ENCODE measurements at regions of chr4 and their contacts with region 1.

Region 1: DNA sequence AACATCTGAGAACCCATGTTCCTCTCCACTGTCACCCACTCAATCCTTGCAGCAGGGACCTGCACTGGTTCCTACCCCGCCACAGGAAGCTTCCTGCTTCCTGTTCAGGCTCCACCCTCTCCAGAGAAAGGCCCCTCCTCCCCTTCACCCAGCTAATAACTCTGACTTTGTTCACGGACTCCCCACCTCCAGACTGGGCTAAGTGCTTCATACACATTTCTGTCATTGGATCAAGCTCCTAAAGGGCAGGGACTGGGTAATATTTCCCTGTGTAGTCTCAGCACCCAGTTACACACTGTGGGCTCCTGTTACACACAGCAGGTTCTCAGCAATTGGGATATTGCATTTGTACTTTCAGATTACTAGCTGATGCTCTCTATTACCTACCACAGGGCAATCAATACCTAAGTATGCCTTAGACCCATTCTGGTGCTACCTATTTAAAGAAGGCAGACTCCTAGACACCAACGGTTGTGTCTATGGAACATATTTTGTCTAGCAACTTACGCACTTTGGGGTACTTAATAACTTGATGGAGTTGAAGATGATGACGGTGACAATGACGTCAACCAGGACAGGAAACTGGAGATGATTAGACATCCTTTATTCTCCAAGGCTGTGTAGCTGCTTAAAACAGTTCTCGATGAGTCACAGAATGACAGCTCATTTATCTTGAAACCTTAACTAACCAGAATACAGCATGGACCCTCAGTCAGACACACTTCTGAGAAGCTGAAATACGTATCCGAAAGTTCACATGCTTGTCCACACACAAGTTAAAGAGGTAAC is 58.1 kb downstream of the MAML3 start:
- DNase-seq: peak; percentile 59 to 91 (median 72)
- H3K4me3 ChIP-seq: peak overlapping the region; percentile 4 to 21
- H3K4me3 Mint-ChIP-seq: peak overlapping the region; percentile 76 to 85 (median 80)
- H3K27ac ChIP-seq: peak overlapping the region; percentile 61
- H3K27ac Mint-ChIP-seq: peak overlapping the region; percentile 82 to 94 (median 93)
- H3K4me1 ChIP-seq: peaks cover 48% of the 10 kb centered on the region
- H3K4me1 Mint-ChIP-seq: peaks cover 39 to 51% (median 50%) of the 10 kb centered on the region in 4 donors
- H3K27me3 ChIP-seq: no peaks in the 10 kb centered on the region
- H3K27me3 Mint-ChIP-seq: no peaks in the 10 kb centered on the region

Region 2: DNA sequence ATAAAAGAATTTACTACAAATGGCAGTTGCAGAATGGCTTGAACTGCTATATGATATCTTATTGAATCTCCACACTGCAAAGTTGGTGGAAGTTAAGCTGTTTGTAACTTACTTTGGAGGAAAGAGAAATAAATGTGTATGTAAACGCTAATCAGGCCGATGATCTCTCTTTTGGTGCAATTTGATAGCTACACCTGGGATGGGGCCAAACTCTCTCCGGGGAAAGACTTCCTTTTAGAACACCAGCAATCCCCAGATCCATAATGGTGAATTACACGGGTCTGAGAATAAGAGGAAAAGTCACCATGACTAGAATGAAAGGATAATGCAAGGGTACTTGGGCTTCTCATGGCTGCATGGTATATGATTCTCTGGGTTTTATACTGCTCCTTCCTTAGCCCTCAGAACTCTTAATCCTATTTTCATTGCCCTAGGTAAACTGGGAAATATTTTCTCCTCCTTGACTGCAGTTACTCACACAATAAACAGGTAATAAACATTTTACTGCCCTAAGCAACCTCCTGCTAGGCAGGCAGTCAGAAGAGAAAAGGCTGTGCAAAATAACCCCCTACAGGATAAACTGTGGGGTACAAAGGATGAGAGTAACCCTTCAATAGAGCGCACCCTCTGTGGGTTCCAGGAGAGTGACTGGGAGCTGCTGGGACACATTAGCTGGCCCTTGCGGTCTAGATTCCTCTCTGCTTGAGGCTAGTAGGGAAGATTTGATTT is 321.0 kb before region 1 on chr4:
- CTCF ChIA-PET with region 1: no interaction called
- POLR2A ChIA-PET with region 1: no interaction called
- intact Hi-C with region 1: no loop called
- DNase-seq: no peak
- H3K4me3 ChIP-seq: no peak overlapping the region
- H3K4me3 Mint-ChIP-seq: no peak overlapping the region
- H3K27ac ChIP-seq: no peak overlapping the region
- H3K27ac Mint-ChIP-seq: no peak overlapping the region
- H3K4me1 ChIP-seq: no peaks in the 10 kb centered on the region
- H3K4me1 Mint-ChIP-seq: no peaks in the 10 kb centered on the region
- H3K27me3 ChIP-seq: no peaks in the 10 kb centered on the region
- H3K27me3 Mint-ChIP-seq: peaks cover 0 to 1% of the 10 kb centered on the region in 2 donors

Region 3: GRCh38 chr4:140049024-140049848 is 46.7 kb before region 1 on chr4:
- CTCF ChIA-PET with region 1: interaction called, 3 read pairs
- POLR2A ChIA-PET with region 1: no interaction called
- intact Hi-C with region 1: loop called (anchors 5 kb)
- DNase-seq: peak; percentile 26 to 50 (median 42)
- H3K4me3 ChIP-seq: peak overlapping the region in 1 of 2 donors; percentile 17
- H3K4me3 Mint-ChIP-seq: peak overlapping the region; percentile 76 to 92 (median 85)
- H3K27ac ChIP-seq: no peak overlapping the region
- H3K27ac Mint-ChIP-seq: peak overlapping the region; percentile 1 to 91 (median 85)
- H3K4me1 ChIP-seq: peaks cover 19% of the 10 kb centered on the region
- H3K4me1 Mint-ChIP-seq: peaks cover 14 to 29% (median 16%) of the 10 kb centered on the region in 4 donors
- H3K27me3 ChIP-seq: no peaks in the 10 kb centered on the region
- H3K27me3 Mint-ChIP-seq: peaks cover 3 to 6% of the 10 kb centered on the region in 2 donors

Region 4: DNA sequence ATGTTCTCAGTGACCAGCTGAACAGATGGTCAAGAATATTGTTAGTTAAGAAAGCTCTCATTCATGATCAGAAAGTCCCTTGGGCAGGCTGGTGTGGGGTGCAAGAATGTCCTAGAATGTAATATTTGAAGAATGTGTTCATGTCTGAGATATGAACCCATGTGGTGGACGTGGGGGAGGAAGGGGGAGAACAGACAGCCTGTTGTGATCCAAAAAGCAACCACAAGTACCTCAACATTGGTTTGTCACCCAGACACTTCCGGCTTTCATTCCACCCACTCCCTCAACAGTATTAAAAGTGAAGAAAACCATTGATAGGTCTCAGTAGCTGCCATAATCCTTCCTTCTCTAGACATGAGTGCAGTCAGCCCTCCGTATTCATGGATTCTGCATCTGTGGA is 24.1 kb before region 1 on chr4:
- CTCF ChIA-PET with region 1: interaction called, 5 read pairs
- POLR2A ChIA-PET with region 1: interaction called, 7 read pairs
- intact Hi-C with region 1: loop called (anchors 2 kb)
- DNase-seq: peak; percentile 54 to 81 (median 66)
- H3K4me3 ChIP-seq: no peak overlapping the region
- H3K4me3 Mint-ChIP-seq: peak overlapping the region; percentile 23 to 85 (median 67)
- H3K27ac ChIP-seq: no peak overlapping the region
- H3K27ac Mint-ChIP-seq: peak overlapping the region in 5 of 7 donors; percentile 70 to 86 (median 72)
- H3K4me1 ChIP-seq: peaks cover 27% of the 10 kb centered on the region
- H3K4me1 Mint-ChIP-seq: peaks cover 27 to 39% (median 33%) of the 10 kb centered on the region in 4 donors
- H3K27me3 ChIP-seq: no peaks in the 10 kb centered on the region
- H3K27me3 Mint-ChIP-seq: peaks cover 0 to 2% of the 10 kb centered on the region in 2 donors